OCI-LY7 (cell line): ENCODE measurements at regions of chr5 and their contacts with region 1.

Region 1: GRCh38 chr5:157142317-157143126 is at the start of gene MED7:
- DNase-seq: peak; percentile 100
- H3K4me3 ChIP-seq: peak within 1 kb of the TSS; percentile 90
- H3K27ac ChIP-seq: peak within 1 kb of the TSS; percentile 68
- H3K4me1 ChIP-seq: peaks cover 14% of the 10 kb centered on the region
- CTCF ChIP-seq: no peak
- total RNA-seq, gene MED7: 19.0 and 23.3 TPM in 2 replicates

Region 2: GRCh38 chr5:157108976-157109375 is 33.5 kb before region 1 on chr5 and contains the start of gene HAVCR2:
- CTCF ChIA-PET with region 1: no interaction called
- POLR2A ChIA-PET with region 1: interaction called, 10 read pairs
- intact Hi-C with region 1: no loop called
- DNase-seq: peak; percentile 85
- H3K4me3 ChIP-seq: peak within 1 kb of the TSS; percentile 63
- H3K27ac ChIP-seq: peak within 1 kb of the TSS; percentile 82
- H3K4me1 ChIP-seq: peaks cover 42% of the 10 kb centered on the region
- CTCF ChIP-seq: no peak
- total RNA-seq, gene HAVCR2: 4.2 and 7.4 TPM in 2 replicates